ENCODE measurements at regions of chr7 and their contacts with region 1.

Region 1: DNA sequence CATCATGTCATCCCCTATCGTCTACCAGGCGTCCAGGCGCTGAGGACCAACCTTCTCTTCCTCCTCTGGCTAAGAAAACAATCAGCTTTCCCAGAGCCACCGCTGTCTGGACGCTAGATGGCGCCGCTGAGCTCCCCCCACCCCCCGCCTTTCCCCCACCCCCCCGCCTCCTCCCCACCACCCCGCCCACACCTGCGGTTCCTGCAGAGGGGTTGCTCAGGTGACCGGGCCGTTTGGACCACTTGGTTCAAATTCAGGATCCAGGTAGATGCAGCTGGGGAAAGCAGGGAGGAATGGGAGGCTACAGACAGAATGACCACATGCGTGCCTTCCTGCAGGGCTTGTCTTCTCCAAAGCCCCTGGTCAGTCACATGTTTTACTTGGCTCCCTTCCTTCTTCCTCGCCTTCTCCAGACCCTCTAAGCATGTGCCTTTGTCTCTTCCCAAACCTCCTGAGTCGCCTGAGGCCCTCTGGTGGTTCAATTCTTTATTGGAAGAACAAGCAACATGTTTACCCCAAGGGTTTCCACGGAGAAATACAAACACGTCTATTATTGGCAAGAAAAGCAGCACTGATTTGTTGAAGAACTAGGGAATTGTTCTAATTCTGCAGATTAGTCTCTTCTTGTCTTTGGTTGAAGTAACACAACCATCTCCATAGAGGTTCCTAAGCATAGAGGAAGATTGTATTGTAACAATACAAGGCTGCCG is 24.7 kb downstream of the AOC1 start:
- DNase-seq: no peak

Region 2: DNA sequence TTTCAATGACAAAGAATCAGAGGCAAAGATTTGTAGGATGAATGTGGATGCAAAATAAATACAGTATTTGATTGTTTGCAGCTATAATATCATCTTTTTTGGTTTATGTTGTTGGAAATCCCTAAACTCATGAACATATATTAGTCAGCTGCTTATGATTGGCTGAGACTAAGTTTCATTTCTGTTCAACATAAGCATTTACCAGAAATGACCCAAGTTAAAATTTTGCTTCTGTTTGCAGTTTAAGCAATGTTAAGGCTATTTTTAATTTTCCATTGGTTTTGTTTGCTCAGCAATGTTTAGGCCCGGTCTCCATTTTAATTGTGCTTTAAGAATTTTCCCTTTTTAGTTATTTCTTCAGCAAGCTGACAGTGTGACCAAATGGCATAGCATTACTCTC is 266.7 kb before region 1 on chr7:
- intact Hi-C with region 1: no loop called
- DNase-seq: no peak

Region 3: DNA sequence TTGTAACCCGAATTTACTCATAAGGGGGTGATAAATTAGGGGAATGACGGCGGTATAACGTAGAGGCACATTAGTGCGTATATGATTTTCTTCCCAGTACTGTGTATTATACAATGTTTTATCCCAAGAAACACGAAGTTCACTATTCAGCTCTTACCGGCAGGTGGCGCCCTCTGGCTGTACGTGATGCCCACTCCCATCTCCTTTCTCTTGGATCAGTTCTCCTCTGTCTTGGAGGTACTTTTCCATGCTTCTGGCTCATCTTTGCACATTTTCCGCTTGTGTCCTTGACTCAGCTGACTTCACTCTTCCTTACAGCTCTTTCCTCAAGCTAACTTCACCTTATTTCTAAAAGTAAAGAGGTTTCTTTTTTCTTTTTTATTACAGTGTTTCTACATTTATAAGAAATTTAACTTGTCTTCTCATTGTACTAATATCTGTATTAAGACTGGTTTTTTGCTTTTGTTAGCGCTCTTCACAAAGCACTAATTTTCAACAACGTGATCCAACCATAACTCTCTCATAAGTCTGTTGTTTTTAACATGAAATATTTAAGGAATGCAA is 98.2 kb before region 1 on chr7:
- intact Hi-C with region 1: loop called (anchors 2 kb)
- DNase-seq: no peak

Measured in cardiac septum (tissue), 1 donor.